Right ventricle myocardium superior (tissue), 1 donor: ENCODE measurements at regions of chr3 and their contacts with region 1.

Region 1: DNA sequence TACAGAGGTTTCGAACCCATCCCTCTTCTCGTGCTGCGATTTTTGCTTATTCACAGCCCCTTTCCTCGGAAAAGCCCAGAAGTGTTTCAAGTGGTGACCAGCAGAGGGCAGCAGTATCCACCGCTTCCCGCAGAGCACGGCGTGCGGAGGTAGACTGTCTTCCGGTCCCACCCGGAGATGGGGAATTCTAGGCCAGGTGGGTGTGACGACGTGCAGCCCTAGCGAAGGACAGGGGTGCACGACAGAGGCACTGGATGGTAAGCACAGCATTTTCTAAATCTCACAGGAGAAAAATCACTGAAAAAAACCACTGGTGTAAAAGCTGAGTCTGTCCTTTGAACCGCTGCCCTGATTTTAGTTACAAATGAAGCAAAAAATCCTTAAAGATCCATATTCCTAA is 7.4 kb upstream of the PSMD6 start:
- DNase-seq: peak; percentile 76
- ATAC-seq: peak; percentile 89

Region 2: GRCh38 chr3:64152086-64152485 is 121.3 kb after region 1 on chr3:
- intact Hi-C with region 1: no loop called
- DNase-seq: no peak
- ATAC-seq: no peak

Region 3: GRCh38 chr3:64224826-64225610 is 194.3 kb after region 1 on chr3 and contains the start of gene PRICKLE2:
- intact Hi-C with region 1: loop called (anchors 10 kb)
- DNase-seq: peak; percentile 84
- ATAC-seq: peak; percentile 69
- total RNA-seq, gene PRICKLE2: 5.9 TPM

Region 4: GRCh38 chr3:64399205-64399800 is 368.6 kb after region 1 on chr3:
- intact Hi-C with region 1: loop called (anchors 2 kb)
- DNase-seq: no peak
- ATAC-seq: peak; percentile 79

Region 5: DNA sequence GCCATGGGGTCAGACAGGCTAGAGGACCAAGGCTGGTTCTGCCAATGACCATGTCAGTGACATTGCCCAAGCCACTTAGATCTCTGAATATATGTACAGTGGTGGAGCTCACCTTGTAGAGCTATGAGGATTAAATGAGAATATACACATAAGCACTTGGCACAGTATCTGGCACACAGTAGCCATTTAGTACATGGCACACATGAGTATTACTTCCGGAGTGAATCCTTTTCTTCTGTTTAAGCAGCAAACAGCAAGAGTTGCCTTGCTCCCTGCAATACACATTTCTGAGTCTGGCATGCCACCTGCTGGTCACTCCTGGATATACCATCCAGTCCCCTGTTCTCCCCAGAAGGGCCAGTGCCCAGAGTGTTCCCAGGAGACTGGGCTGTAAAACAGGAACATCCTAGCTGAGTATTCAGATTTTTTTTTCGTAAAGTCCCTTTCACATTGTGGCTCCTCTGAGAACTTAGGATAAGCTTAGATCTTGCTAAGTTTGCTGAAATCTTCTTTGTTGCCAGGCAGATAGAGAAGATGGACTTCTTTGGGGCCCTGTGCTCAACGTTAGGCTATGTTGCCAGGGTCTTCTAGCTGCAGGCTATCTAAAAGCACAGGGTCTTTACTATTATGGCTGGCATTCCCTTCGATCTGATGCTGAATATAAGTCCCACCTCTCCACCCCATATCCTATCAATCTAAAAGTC is 453.7 kb after region 1 on chr3:
- intact Hi-C with region 1: loop called (anchors 2 kb)
- DNase-seq: peak; percentile 84
- ATAC-seq: peak; percentile 98